ENCODE measurements at regions of chr20 and their contacts with region 1.

Region 1: GRCh38 chr20:31698803-31699718 is 23.6 kb downstream of the BCL2L1 start:
- DNase-seq: peak; percentile 99
- ATAC-seq: peak; percentile 43
- H3K4me3 ChIP-seq: no peak overlapping the region
- H3K27ac ChIP-seq: peak overlapping the region; percentile 71
- H3K4me1 ChIP-seq: peaks cover 40% of the 10 kb centered on the region
- H3K27me3 ChIP-seq: no peaks in the 10 kb centered on the region
- CTCF ChIP-seq: no peak

Region 2: DNA sequence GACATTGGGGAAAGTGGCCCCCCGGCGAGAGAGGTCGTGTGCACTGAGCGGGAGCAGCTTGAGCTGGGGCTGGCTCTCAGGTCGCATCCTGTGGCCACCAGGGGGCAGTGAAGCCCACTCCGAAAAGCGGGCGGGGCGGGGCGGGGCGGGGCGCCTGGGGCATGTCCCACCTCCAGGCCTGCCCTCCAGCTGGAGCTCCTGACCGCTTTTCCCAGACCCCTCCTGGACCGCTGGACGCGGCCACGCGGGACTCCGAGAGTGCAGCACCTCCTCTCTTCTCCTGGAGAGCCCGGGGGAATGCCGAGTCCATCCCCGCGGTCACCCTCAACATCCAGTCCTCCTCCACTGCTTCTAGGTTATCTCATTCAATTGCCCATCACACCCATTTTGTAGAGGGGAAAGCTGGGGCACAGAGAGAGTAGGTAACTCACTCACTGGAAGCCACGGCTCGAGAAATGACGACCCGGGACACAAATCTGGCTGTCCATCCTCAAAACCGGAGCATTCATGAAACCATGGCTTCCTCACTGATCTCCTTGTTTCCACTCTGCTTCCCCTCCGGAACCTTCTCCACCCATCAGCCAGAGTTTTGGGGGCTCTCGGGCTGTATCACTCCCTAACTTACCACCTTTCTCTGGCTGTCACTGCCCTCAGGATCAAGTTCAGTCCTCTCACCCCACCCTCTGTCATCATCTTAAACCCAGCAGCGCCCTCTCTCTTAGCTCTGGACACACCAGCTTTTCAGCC is 37.3 kb before region 1 on chr20:
- CTCF ChIA-PET with region 1: interaction called, 22 read pairs
- POLR2A ChIA-PET with region 1: no interaction called
- in situ Hi-C with region 1: no loop called
- intact Hi-C with region 1: no loop called
- DNase-seq: peak; percentile 74
- ATAC-seq: peak; percentile 81
- H3K4me3 ChIP-seq: peak overlapping the region; percentile 27 to 64
- H3K27ac ChIP-seq: peak overlapping the region; percentile 78
- H3K4me1 ChIP-seq: peaks cover 40% of the 10 kb centered on the region
- H3K27me3 ChIP-seq: no peaks in the 10 kb centered on the region
- CTCF ChIP-seq: peak; percentile 98

Region 3: DNA sequence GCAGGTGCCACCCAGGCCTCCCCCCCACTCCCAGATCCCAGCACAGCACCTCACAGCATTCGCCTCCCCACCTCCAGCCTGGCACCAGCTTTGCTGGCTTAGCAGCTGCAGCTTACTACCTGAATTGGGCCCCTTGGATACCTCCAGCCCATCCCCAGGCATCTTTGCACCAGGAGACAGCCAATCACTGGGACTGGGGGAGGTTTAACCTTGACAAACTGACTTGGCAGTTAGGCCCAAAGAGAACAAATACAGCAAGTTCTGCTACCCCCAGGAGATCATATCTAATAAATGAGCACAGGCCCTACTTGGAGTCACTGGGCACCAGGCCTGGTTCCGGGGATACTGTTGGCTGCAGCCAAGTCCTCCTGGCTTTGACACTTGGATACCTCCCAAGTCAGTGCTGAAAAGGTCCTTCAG is 244.0 kb after region 1 on chr20:
- CTCF ChIA-PET with region 1: no interaction called
- POLR2A ChIA-PET with region 1: no interaction called
- in situ Hi-C with region 1: no loop called
- intact Hi-C with region 1: no loop called
- DNase-seq: no peak
- ATAC-seq: peak; percentile 35
- H3K4me3 ChIP-seq: no peak overlapping the region
- H3K27ac ChIP-seq: peak overlapping the region; percentile 37; the same call in 1 of the 2 replicates
- H3K4me1 ChIP-seq: peaks cover 19% of the 10 kb centered on the region
- H3K27me3 ChIP-seq: no peaks in the 10 kb centered on the region
- CTCF ChIP-seq: no peak

Measured in Panc1 (cell line).